Activated naive CD4-positive, alpha-beta T cell treated with anti-CD3 and anti-CD28 coated beads for 36 hours (primary cell): ENCODE measurements at regions of chr1 and their contacts with region 1.

Region 1: DNA sequence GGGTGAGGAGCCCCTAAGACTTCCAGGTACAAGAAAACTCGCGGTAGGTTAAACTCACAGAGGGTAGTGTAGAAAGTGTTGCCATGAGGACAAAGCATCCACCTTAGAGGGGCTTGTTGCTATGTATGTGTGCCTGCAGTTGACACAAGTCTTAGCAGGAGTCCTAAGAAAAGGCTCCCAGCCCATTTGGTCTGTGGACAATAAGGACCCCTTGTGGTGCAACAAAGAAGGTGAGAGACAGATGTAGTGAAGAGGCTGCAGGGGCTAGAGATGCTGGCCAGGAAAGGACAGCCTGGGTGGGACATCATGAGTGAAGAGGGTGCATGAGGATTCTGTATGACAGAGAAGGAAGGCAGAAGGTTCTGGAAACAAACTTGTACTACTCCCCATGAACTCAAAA is 36.3 kb upstream of the IL10 start:
- DNase-seq: peak; percentile 70
- H3K4me3 Mint-ChIP-seq: no peak overlapping the region
- H3K27ac Mint-ChIP-seq: no peak overlapping the region
- H3K4me1 Mint-ChIP-seq: peaks cover 42% of the 10 kb centered on the region
- H3K27me3 Mint-ChIP-seq: no peaks in the 10 kb centered on the region

Region 2: DNA sequence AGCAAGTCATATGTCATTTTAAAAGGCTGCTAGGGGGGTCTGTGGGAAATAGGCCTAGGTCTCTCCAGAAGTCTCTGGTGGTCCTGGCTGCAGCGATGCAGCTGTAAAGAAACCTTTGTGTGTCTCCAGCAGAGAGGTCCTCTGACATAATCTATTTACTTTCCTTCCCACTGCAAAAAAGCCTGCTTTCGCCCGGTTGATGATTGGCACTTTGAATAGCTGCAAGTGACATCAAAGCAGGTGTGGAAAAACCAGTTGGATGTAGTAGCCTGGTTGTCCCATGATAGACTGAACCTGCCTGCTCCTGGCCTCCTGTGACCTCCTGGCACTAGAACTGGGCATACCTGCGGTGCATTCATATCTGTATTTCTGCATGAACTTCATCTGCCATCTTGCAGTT is 287.5 kb before region 1 on chr1:
- CTCF ChIA-PET with region 1: no interaction called
- intact Hi-C with region 1: no loop called
- DNase-seq: no peak
- H3K4me3 Mint-ChIP-seq: no peak overlapping the region
- H3K27ac Mint-ChIP-seq: no peak overlapping the region
- H3K4me1 Mint-ChIP-seq: peaks cover 3% of the 10 kb centered on the region
- H3K27me3 Mint-ChIP-seq: no peaks in the 10 kb centered on the region

Region 3: DNA sequence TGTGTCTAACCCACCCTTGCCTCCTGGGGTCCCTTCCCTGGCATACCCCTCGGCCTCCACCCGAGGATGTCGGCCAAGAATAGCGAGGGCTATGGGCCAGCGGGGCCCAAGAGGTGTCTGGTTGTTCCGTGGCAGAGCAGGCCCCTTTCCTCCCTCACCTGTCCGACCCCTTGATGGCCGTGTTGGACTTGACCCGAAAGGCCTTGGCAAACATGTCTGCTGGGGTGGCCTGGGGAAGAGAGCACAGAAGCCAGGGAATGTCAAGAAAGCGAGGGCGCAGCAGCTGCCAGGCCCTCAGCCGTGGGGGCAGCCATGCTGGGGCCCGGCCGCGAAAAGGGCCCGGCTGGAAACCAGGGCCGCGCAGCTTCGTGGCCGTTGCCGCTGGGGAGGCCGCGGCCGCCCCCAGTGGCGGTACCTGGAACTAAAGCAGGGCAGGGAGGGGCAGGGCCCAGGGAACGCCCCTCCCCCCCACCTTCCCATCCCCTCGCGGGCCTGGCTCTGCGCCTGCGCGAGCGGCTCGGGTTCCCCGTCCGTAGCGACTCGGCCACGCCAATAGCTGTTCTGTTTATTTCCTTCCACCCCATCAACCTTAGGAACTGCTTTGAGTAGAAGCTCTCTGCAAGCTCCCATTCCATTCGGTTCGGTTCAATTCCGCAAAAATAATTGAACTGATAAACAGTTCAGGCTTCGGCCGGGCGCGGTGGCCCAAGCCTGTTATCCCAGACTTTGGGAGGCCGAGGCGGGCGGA is 196.3 kb before region 1 on chr1 and contains the start of gene EIF2D:
- CTCF ChIA-PET with region 1: no interaction called
- intact Hi-C with region 1: loop called (anchors 1 kb)
- DNase-seq: peak; percentile 95
- H3K4me3 Mint-ChIP-seq: peak within 1 kb of the TSS; percentile 92
- H3K27ac Mint-ChIP-seq: peak within 1 kb of the TSS; percentile 99
- H3K4me1 Mint-ChIP-seq: peaks cover 44% of the 10 kb centered on the region
- H3K27me3 Mint-ChIP-seq: no peaks in the 10 kb centered on the region
- total RNA-seq, gene EIF2D: 116 to 122 TPM

Region 4: GRCh38 chr1:206658264-206658980 is 150.2 kb before region 1 on chr1:
- CTCF ChIA-PET with region 1: interaction called, 23 read pairs
- intact Hi-C with region 1: loop called (anchors 1 kb)
- DNase-seq: peak; percentile 69
- H3K4me3 Mint-ChIP-seq: no peak overlapping the region
- H3K27ac Mint-ChIP-seq: no peak overlapping the region
- H3K4me1 Mint-ChIP-seq: peaks cover 33% of the 10 kb centered on the region
- H3K27me3 Mint-ChIP-seq: peaks cover 24% of the 10 kb centered on the region

Region 5: GRCh38 chr1:206766251-206766856 is 42.3 kb before region 1 on chr1:
- CTCF ChIA-PET with region 1: interaction called, 28 read pairs
- intact Hi-C with region 1: loop called (anchors 1 kb)
- DNase-seq: peak; percentile 79
- H3K4me3 Mint-ChIP-seq: no peak overlapping the region
- H3K27ac Mint-ChIP-seq: no peak overlapping the region
- H3K4me1 Mint-ChIP-seq: peaks cover 63% of the 10 kb centered on the region
- H3K27me3 Mint-ChIP-seq: peaks cover 7% of the 10 kb centered on the region

Region 6: DNA sequence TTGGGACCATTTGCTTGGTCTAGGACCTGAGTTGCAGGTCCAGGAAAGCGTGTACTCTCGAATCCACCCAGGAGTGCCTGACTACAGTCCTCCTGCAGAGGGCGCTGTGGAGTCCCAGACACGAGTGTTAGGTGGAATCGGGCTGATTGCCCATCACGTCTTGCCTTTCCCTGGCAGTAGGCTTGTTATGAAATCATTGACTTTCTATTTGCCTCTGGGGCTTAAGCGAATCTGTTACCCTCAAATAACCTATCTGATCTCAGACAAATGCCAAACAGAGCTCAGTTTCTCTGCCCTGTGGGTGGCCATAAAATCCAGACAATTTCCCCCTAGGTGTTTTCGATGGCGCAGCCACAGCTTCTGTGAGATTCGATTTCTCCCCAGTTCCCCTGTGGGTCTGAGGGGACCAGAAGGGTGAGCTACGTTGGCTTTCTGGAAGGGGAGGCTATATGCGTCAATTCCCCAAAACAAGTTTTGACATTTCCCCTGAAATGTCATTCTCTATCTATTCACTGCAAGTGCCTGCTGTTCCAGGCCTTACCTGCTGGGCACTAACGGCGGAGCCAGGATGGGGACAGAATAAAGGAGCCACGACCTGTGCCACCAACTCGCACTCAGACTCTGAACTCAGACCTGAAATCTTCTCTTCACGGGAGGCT is 56.5 kb after region 1 on chr1 and contains the start of gene IL20:
- CTCF ChIA-PET with region 1: interaction called, 6 read pairs
- intact Hi-C with region 1: loop called (anchors 2 kb)
- DNase-seq: peak; percentile 98
- H3K4me3 Mint-ChIP-seq: no peak within 1 kb of the TSS
- H3K27ac Mint-ChIP-seq: no peak within 1 kb of the TSS
- H3K4me1 Mint-ChIP-seq: peaks cover 30% of the 10 kb centered on the region
- H3K27me3 Mint-ChIP-seq: no peaks in the 10 kb centered on the region
- total RNA-seq, gene IL20: 0.31 TPM in 1 of 2 experiments, not detected in the other

Region 7: GRCh38 chr1:206935491-206936067 is 127.0 kb after region 1 on chr1:
- CTCF ChIA-PET with region 1: interaction called, 11 read pairs
- intact Hi-C with region 1: loop called (anchors 1 kb)
- DNase-seq: peak; percentile 66
- H3K4me3 Mint-ChIP-seq: no peak overlapping the region
- H3K27ac Mint-ChIP-seq: no peak overlapping the region
- H3K4me1 Mint-ChIP-seq: peaks cover 18% of the 10 kb centered on the region
- H3K27me3 Mint-ChIP-seq: no peaks in the 10 kb centered on the region